Sciatic nerve (tissue), 2 donors: ENCODE measurements at regions of chr12 and their contacts with region 1.

Region 1: DNA sequence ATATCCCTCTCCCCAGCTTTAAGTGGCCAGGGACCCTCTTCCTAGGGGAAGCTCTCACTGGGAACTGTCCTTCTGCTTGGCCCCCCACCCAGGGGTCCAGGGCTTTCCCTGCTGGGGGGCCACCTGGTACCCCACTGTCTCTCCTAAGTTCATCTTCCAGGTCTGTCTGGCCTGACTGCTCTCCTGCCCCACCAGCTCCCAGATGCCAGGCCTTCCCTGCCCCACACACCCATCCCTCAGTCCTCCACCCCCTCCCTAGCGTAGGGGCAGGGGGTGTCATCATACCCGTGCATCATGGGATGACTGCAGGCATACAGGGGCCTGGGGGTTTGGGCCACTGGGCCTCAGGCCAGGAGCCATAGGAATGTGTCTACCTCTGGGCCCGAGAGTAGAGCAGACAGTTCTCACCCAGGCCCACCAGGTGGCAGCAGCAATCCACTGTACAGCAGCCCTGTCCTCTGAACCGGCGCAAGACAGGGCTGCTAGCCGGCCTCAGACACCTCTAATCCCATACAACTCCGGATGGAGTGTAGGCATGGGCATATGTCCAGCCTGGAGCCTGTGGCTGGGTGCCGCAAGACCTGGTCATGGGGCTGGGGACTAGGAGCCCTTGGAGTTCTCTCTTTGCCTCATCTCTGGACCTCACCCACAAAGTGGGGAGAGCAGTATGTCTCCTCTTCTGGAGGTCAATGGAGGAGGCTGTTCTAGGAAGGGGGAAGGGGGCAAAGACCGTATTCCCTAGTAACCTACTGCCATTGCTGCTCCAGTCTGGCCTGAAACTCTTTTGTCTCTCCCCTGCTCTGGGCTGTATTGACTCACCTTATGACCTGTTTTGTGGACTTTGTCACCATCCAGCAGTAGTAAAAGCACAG is 10.0 kb upstream of the SMARCD1 start:
- DNase-seq: peak; percentile 92
- ATAC-seq: peak; percentile 88

Region 2: GRCh38 chr12:48366131-48366530 is 1709.0 kb before region 1 on chr12:
- intact Hi-C with region 1: no loop called
- DNase-seq: no peak
- ATAC-seq: no peak

Region 3: GRCh38 chr12:49974231-49974675 is 100.9 kb before region 1 on chr12:
- intact Hi-C with region 1: loop called (anchors 5 kb)
- DNase-seq: peak; percentile 82
- ATAC-seq: peak; percentile 83

Region 4: GRCh38 chr12:50050410-50051098 is 24.6 kb before region 1 on chr12:
- intact Hi-C with region 1: no loop called
- DNase-seq: no peak
- ATAC-seq: peak; percentile 88

Region 5: GRCh38 chr12:50174971-50175715 is 100.0 kb after region 1 on chr12:
- intact Hi-C with region 1: loop called (anchors 10 kb)
- DNase-seq: no peak
- ATAC-seq: peak; percentile 62